ENCODE measurements at regions of chr2 and their contacts with region 1.

Region 1: DNA sequence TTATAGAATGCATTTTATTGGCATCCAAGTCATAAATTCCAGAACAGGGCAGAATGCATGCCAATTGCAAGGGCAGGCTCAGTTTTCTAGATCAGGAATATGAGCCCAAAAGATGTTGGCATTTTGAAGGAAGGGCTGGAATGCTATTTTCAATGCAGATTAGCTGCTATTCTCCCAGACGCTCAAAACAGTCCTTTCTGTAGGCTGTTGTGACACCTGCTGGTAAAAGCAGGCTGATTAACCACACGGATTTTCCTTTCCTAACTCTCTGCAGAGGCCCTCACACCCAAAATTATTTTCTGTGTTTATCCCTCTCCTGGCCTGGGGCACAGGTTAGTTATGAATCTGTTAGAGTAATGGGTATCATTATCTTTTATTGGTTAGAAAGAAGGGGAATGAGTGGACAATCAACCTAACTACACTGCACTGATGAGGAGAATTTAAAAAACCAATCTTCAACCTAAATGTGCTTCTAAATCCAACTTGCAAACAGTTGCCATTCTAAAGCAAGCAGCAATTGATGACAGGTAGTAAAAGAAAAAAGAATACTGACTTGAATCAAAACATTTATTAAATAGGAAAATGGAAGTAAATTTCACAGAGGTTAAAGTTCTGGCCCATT is 94.0 kb downstream of the PLA2R1 start:
- DNase-seq: peak; percentile 18 to 41
- ATAC-seq: peak; percentile 89; a peak in 5 of 6 replicates
- H3K4me3 ChIP-seq: no peak overlapping the region
- H3K27ac ChIP-seq: no peak overlapping the region
- H3K4me1 ChIP-seq: no peaks in the 10 kb centered on the region
- CTCF ChIP-seq: peak; percentile 70
- EP300 ChIP-seq: no peak
- POLR2A ChIP-seq: no peak
- RAD21 ChIP-seq: peak; percentile 81 to 86

Region 2: DNA sequence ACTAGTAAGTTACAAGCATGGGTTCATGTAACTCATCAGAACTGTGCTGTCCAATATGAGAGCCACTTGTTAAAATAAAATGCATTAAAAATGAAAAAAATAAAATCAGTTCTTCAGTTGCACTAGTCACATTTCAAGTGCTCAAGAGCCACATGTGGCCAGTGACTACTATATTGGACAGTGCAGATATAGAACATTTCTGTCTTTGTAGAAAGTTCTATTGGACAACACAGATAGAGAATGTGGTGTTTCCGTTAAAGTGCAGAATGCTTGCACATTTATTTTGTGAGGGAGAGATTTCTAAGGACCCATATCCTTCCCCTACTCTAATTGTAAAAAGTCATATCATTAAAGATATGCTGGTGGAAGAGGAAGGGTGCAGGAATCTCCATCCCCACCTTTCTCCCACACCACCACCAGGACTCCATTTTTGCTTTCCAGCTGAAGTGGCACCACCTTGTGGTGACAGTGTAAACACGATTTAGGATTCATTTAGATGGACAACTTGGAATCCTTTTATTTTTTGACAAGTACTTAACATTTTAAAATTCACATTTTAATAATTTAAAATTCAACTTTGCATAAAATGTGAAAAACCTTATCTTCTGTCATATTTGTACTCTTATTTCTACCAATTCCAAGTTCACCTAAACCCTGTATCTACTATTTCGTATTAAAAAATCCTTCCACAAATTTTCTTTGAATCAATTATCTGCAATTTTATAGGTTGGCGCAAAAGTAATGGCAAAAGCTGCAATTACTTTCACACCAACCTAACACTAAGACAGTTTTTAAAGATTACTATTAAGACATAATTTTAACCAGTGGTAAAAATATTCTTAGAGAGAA is 161.0 kb before region 1 on chr2:
- CTCF ChIA-PET with region 1: interaction called, 12 read pairs
- POLR2A ChIA-PET with region 1: no interaction called
- DNase-seq: peak; percentile 57 to 72
- ATAC-seq: peak; percentile 85 to 93; a peak in 5 of 6 replicates
- H3K4me3 ChIP-seq: no peak overlapping the region
- H3K27ac ChIP-seq: no peak overlapping the region
- H3K4me1 ChIP-seq: no peaks in the 10 kb centered on the region
- CTCF ChIP-seq: peak; percentile 83
- EP300 ChIP-seq: no peak
- POLR2A ChIP-seq: no peak
- RAD21 ChIP-seq: peak; percentile 74 to 81

Measured in A549 (cell line).